ENCODE measurements at regions of chr1 and their contacts with region 1.

Region 1: GRCh38 chr1:24541711-24542346 is 14.1 kb upstream of the NCMAP start:
- H3K4me3 ChIP-seq: no peak overlapping the region
- H3K27ac ChIP-seq: no peak overlapping the region
- H3K4me1 ChIP-seq: no peaks in the 10 kb centered on the region
- CTCF ChIP-seq: peak; percentile 54

Region 2: GRCh38 chr1:24558902-24559791 is 17.3 kb after region 1 on chr1:
- CTCF ChIA-PET with region 1: interaction called, 24 read pairs
- POLR2A ChIA-PET with region 1: interaction called, 4 read pairs
- H3K4me3 ChIP-seq: no peak overlapping the region
- H3K27ac ChIP-seq: no peak overlapping the region
- H3K4me1 ChIP-seq: peaks cover 17% of the 10 kb centered on the region
- CTCF ChIP-seq: no peak

Region 3: GRCh38 chr1:24567792-24568388 is 26.1 kb after region 1 on chr1:
- CTCF ChIA-PET with region 1: interaction called, 13 read pairs
- POLR2A ChIA-PET with region 1: no interaction called
- H3K4me3 ChIP-seq: no peak overlapping the region
- H3K27ac ChIP-seq: no peak overlapping the region
- H3K4me1 ChIP-seq: peaks cover 2% of the 10 kb centered on the region; the same call in 1 of the 2 replicates
- CTCF ChIP-seq: no peak

Region 4: GRCh38 chr1:24594154-24594553 is 52.3 kb after region 1 on chr1:
- CTCF ChIA-PET with region 1: interaction called, 37 read pairs
- POLR2A ChIA-PET with region 1: no interaction called
- H3K4me3 ChIP-seq: no peak overlapping the region
- H3K27ac ChIP-seq: no peak overlapping the region
- H3K4me1 ChIP-seq: peaks cover 4% of the 10 kb centered on the region
- CTCF ChIP-seq: no peak

Region 5: DNA sequence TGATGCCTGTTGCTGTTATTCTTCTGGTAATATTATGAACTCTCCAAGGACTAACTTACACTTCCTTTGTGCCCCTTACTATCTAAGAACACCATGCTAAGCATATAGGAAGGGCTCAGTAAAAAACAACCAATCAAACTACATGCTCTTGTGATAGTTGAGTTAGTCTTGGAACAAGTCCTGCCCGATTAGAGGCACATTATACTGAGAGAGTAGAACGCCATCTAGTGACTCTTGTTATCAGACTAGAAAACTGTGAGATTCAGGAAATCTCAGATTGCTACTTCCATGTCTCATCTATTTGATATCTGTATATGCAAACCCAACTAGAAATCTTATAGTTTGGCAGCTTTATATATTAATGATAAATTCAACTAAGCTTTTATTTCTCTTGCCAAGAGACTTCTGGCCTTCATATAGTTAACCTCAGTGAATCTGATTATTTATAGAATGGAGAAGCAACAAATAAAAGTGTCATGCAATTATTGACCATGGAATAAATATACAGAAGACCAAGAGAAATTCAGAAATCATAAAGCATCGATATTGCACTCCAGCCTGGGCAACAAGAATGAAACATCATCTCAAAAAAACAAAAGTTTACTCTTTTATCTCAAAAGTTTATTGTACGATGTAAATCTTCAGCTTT is 93.5 kb after region 1 on chr1:
- CTCF ChIA-PET with region 1: interaction called, 73 read pairs
- POLR2A ChIA-PET with region 1: no interaction called
- H3K4me3 ChIP-seq: no peak overlapping the region
- H3K27ac ChIP-seq: no peak overlapping the region
- H3K4me1 ChIP-seq: no peaks in the 10 kb centered on the region
- CTCF ChIP-seq: peak; percentile 50; the same call in 1 of the 2 replicates

Measured in HEK293 (cell line).